Left cardiac atrium (tissue), 4 donors: ENCODE measurements at regions of chr1 and their contacts with region 1.

Region 1: DNA sequence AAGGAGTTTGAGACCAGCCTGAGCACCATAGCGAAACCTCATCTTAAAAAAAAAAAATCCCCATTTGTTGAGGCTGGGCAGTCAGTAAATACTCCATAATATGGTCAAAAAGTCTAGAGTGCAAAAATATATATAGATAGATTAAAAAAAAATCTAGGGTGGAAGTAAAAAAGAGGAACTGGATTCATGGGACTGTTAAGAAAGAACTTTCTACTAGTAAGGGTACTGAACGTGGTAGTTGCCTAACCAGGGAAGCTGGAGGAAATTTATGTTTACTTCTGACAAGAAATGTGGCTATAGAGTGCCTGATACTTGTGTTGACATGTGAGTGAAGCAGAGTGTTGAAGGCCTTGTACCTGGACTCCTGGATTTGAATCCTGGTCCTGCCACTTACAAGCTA is 265.9 kb upstream of the FAM78B start:
- DNase-seq: no peak
- ATAC-seq: no peak

Region 2: DNA sequence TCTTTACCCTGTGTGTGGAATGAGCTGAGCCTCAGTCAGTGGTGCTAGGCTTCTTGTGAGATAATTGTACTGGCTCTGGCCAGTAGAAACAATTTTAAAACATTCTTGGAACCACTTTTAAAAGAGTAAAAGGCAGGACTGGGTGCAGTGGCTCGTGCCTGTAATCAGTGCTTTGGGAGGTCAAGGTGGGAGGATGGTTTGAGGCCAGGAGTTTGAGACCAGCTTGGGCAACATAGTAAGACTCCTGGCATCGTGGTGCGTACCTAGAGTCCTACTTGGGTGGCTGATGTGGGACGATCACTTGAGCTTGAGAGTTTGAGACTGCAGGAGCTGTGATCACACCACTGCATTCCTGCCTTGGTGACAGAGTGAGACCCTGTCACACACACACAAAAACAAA is 515.5 kb before region 1 on chr1:
- intact Hi-C with region 1: no loop called
- DNase-seq: no peak
- ATAC-seq: no peak

Region 3: DNA sequence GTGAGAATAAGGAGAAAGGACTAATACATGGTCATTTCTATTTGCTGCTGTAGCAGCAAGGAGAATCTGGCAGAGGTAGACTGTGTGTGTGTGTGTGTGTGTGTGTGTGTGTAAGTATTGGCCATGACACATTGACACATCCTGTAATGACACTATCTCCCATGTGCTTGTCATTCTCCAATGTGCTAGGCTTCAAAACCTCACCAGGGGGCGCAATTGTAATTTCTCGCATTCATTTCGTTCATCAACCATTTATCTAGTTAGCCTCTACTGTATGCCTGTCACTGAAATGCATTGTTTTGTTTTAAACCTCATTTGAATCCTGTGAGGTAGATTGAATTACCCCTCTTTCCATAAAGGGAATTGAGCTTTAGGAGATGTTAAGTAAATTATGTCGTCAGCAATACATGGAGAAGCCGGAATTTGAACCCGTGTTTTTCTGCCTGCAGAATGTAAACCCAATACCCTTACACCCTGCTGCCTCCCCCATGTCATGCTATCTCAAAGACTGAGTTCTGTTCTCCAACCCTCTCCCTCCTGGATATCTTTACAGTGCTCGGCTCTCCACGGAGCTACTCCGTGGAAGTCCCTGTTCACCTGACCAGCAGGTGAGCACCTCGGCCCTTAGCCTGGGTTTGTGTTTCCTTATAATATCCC is 504.5 kb before region 1 on chr1:
- intact Hi-C with region 1: loop called (anchors 2 to 10 kb)
- DNase-seq: no peak
- ATAC-seq: peak in 1 of 2 donors; percentile 27

Region 4: GRCh38 chr1:165933446-165934178 is 499.0 kb before region 1 on chr1:
- intact Hi-C with region 1: loop called (anchors 2 to 10 kb)
- DNase-seq: no peak
- ATAC-seq: no peak

Region 5: DNA sequence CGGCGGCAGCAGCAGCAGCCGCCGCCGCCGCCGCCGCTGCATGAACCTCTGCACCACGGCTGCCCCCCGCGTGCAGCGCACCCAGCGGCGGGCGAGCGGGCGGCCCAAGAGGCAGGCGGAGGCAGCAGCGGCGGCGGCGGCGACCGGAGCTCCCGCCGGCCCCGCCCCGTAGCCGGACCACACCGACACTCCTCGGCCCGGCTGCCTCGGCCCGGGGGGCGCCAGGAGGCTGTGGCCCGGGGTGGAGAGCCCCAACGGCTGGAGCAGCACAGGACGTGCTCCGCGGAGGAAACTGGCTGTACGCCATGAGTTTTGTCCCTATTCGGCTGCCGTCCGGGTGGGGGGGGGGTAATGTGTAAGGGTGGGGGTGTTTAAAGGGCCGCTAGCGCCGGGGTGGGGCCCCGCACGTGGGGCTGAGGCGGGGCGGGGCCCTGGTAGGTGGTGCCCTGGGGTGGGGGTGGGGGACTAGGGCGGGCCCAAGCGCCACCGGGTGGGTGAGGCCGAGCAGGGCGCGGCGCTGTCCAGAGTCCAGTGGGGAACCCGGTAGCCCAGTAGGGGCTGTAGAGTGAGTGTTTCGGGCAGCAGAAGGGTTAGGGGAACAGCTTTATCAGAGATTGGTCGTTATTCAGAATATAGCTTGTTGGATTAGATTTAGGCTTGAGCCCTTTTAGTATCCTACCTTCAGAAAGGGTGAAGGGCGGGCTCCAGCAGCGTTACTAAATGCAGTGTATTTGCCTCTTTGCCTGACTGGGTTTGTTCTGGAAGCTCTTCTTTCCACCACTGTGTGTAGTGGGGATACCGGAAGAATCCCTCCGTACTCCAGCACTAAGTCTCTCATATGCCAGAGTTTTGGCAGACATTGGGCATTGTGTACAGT is 265.7 kb before region 1 on chr1 and contains the start of gene FAM78B:
- intact Hi-C with region 1: loop called in 1 of 2 experiments (anchors 10 kb)
- DNase-seq: peak; percentile 83
- ATAC-seq: peak; percentile 93 to 95
- total RNA-seq, gene FAM78B: 6.0 to 11.9 TPM